Colonic mucosa (tissue), 4 donors: ENCODE measurements at regions of chr2 and their contacts with region 1.

Region 1: DNA sequence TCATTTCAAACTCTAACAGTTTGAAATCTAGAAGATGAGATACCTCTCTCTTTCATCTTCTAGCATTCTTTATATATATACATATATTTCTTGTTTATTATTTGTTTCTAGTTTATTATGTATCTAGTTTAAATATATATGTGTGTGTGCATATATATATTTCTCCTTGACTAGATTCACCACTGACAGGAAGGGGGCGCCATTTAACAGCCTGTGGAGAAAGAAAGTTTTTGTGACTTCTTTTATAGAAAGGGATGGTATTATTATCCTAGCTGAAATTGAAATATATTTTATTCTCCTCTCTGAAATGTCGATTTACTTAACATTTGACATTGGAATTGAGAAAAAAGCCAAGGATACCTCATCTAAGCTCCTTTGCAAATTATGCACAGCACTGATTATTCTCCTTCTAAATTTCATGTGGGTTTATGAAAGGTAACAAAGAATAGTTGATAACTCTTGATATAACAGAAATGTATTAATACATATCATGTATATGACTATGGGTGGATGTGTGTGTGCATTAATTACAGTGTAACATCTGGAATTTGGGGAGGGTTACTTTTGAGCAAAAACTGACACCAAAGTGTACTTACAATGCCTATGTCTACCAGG is 160.7 kb upstream of the NT5C1B start:
- DNase-seq: peak; percentile 76
- H3K4me3 ChIP-seq: no peak overlapping the region
- H3K27ac ChIP-seq: no peak overlapping the region
- H3K4me1 ChIP-seq: no peaks in the 10 kb centered on the region
- H3K27me3 ChIP-seq: no peaks in the 10 kb centered on the region
- CTCF ChIP-seq: peak; percentile 65

Region 2: DNA sequence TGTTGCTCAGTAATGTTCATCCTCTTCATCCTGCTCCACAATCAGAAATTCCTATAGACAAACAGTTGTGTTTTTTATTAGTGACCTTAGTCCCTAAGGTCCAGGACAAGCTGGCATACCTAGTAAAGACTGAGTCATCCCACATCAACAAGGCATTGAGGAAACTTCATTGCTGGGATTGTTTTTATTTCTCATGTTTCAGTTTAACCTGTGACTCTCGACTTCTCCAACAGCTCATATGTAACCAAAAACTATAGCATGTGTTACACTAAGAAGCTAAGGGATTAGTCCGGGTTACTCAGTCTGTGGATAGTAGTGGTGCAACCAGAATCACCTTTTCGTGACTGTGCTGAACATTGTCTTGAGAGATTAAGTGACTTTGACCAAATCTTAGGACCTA is 481.6 kb before region 1 on chr2:
- intact Hi-C with region 1: no loop called
- DNase-seq: no peak
- H3K4me3 ChIP-seq: no peak overlapping the region
- H3K27ac ChIP-seq: no peak overlapping the region
- H3K4me1 ChIP-seq: no peaks in the 10 kb centered on the region
- H3K27me3 ChIP-seq: no peaks in the 10 kb centered on the region
- CTCF ChIP-seq: no peak

Region 3: DNA sequence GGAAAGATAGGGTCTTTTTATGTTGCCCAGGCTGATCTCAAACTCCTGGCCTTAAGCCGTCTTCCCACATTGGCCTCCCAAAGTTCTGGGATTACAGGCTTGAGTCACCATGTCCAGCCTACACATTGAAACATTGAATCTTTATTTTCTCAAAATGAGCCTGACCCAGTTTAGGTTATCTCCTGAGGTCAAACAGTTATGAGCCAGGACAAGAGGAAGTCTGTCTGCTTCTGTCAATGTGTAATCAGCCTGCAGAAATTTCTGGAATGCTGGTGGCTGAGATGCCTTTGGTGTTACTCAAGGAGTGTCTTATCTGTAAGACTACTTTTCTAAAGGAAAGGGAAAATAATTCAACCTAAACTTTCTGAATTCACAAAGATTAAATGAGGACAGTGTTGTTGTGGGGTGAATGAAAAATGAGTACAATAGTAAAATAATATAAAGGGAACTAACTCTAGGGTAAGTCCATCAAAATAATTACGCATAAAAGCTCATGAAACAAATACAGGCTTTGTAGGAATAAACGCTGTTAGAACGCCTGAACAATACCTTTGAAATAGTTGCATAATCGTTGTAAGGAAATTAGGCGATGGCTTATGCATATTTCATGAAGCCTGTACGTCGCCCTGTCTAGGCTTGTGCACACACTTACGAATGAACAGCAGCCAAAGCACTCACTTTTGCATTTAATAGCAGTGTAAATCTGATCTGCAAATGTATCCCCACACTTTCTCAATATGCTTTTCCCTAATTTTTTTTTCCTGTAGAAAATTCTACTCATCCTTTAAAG is 450.4 kb before region 1 on chr2:
- intact Hi-C with region 1: no loop called
- DNase-seq: no peak
- H3K4me3 ChIP-seq: no peak overlapping the region
- H3K27ac ChIP-seq: no peak overlapping the region
- H3K4me1 ChIP-seq: no peaks in the 10 kb centered on the region
- H3K27me3 ChIP-seq: no peaks in the 10 kb centered on the region
- CTCF ChIP-seq: no peak

Region 4: GRCh38 chr2:18520451-18521425 is 229.3 kb before region 1 on chr2:
- intact Hi-C with region 1: loop called (anchors 2 kb)
- DNase-seq: peak; percentile 84
- H3K4me3 ChIP-seq: no peak overlapping the region
- H3K27ac ChIP-seq: no peak overlapping the region
- H3K4me1 ChIP-seq: no peaks in the 10 kb centered on the region
- H3K27me3 ChIP-seq: no peaks in the 10 kb centered on the region
- CTCF ChIP-seq: peak; percentile 82

Region 5: GRCh38 chr2:18639756-18640453 is 110.1 kb before region 1 on chr2:
- intact Hi-C with region 1: no loop called
- DNase-seq: no peak
- H3K4me3 ChIP-seq: no peak overlapping the region
- H3K27ac ChIP-seq: no peak overlapping the region
- H3K4me1 ChIP-seq: no peaks in the 10 kb centered on the region
- H3K27me3 ChIP-seq: no peaks in the 10 kb centered on the region
- CTCF ChIP-seq: no peak

Region 6: GRCh38 chr2:18671363-18671762 is 78.7 kb before region 1 on chr2:
- intact Hi-C with region 1: no loop called
- DNase-seq: no peak
- H3K4me3 ChIP-seq: no peak overlapping the region
- H3K27ac ChIP-seq: no peak overlapping the region
- H3K4me1 ChIP-seq: no peaks in the 10 kb centered on the region
- H3K27me3 ChIP-seq: no peaks in the 10 kb centered on the region
- CTCF ChIP-seq: no peak